Activated CD4-positive, alpha-beta memory T cell treated with anti-CD3 and anti-CD28 coated beads for 36 hours (primary cell): ENCODE measurements at regions of chr12 and their contacts with region 1.

Region 1: GRCh38 chr12:106223485-106224354 is 24.1 kb downstream of the CKAP4 start:
- DNase-seq: peak; percentile 83
- H3K4me3 Mint-ChIP-seq: no peak overlapping the region
- H3K27ac Mint-ChIP-seq: no peak overlapping the region
- H3K4me1 Mint-ChIP-seq: peaks cover 16% of the 10 kb centered on the region
- H3K27me3 Mint-ChIP-seq: peaks cover 2% of the 10 kb centered on the region

Region 2: DNA sequence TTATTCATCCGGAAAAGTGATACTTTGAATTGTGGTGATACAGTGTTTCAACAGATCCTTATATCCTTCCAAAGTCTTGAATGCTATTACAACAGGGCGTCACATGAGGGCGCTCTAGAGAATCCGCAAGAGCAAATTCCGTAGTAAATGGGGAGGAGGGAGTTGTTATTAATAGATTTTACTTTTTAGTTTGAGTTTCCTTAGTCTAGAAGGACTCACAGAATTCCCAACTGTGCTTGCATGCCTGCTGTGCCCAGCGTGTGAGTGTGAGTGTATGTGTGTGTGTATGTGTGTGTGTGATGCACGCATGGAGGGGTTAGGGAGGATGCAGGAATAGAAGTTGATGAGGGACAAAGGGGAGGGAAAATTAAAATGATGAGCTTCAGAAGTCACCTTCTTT is 518.0 kb before region 1 on chr12:
- CTCF ChIA-PET with region 1: no interaction called
- POLR2A ChIA-PET with region 1: no interaction called
- intact Hi-C with region 1: loop called (anchors 5 kb)
- DNase-seq: no peak
- H3K4me3 Mint-ChIP-seq: no peak overlapping the region
- H3K27ac Mint-ChIP-seq: no peak overlapping the region
- H3K4me1 Mint-ChIP-seq: no peaks in the 10 kb centered on the region
- H3K27me3 Mint-ChIP-seq: no peaks in the 10 kb centered on the region

Region 3: GRCh38 chr12:106170285-106170684 is 53.4 kb before region 1 on chr12:
- CTCF ChIA-PET with region 1: interaction called, 6 read pairs
- POLR2A ChIA-PET with region 1: no interaction called
- intact Hi-C with region 1: loop called (anchors 5 kb)
- DNase-seq: no peak
- H3K4me3 Mint-ChIP-seq: no peak overlapping the region
- H3K27ac Mint-ChIP-seq: no peak overlapping the region
- H3K4me1 Mint-ChIP-seq: peaks cover 2% of the 10 kb centered on the region
- H3K27me3 Mint-ChIP-seq: peaks cover 16% of the 10 kb centered on the region

Region 4: DNA sequence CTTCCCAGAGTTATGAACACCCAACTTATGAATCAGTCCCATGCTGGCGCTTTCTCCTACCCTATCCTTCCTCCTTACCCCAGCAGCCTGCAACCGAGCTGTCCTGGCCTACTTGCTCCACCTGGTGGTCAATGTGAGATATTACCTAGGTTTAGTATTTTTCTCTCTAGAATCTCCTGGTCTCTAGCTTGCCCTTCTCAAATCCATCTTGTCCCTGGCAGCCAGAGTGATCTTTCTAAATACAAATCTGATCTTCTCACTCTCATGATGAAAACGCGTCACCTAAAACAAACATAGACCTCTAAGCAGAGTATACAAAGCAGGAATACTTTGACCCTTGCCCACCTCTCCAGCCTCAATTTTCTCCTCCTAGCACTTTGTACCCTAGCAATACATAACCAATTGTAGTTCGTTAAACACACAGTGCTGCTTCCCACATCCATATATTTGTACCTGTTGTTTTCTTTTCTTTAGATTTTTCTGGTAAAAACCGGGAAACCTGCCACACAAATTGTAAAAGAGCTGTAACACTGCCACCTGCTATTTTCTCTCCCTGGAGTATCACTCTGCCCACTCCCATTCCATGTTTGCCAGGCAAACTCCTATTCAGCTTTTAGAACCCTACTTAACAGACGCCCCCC is 58.9 kb after region 1 on chr12:
- CTCF ChIA-PET with region 1: interaction called, 285 read pairs
- POLR2A ChIA-PET with region 1: no interaction called
- intact Hi-C with region 1: loop called (anchors 1 kb)
- DNase-seq: peak; percentile 65
- H3K4me3 Mint-ChIP-seq: no peak overlapping the region
- H3K27ac Mint-ChIP-seq: no peak overlapping the region
- H3K4me1 Mint-ChIP-seq: peaks cover 20% of the 10 kb centered on the region
- H3K27me3 Mint-ChIP-seq: peaks cover 1% of the 10 kb centered on the region

Region 5: GRCh38 chr12:106357549-106358395 is 134.1 kb after region 1 on chr12 and contains the start of gene POLR3B:
- CTCF ChIA-PET with region 1: interaction called, 9 read pairs
- POLR2A ChIA-PET with region 1: no interaction called
- intact Hi-C with region 1: loop called (anchors 1 kb)
- DNase-seq: peak; percentile 97
- H3K4me3 Mint-ChIP-seq: peak within 1 kb of the TSS; percentile 93
- H3K27ac Mint-ChIP-seq: peak within 1 kb of the TSS; percentile 92
- H3K4me1 Mint-ChIP-seq: peaks cover 15% of the 10 kb centered on the region
- H3K27me3 Mint-ChIP-seq: no peaks in the 10 kb centered on the region
- total RNA-seq, gene POLR3B: 6.2 to 7.3 TPM

Region 6: DNA sequence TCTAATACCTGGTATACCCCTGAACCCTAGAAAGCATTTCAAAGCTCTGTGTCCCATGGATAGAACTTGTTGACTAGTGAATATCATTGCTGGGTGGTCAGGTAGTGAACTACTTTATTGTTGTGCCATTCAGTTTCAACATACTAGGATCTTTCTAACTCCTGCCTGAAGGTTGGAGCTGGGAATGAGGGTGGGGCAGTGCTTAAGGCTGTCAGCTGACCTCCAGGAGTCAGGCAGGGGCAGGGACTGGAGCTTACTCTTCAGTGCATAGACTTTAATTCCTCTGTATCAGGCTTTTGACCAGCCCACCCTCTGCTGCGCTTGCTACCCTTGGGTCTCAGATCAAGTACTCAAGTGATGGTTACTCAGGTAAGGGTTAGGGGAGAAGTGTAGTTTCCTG is 256.5 kb after region 1 on chr12:
- CTCF ChIA-PET with region 1: no interaction called
- POLR2A ChIA-PET with region 1: no interaction called
- intact Hi-C with region 1: no loop called
- DNase-seq: no peak
- H3K4me3 Mint-ChIP-seq: no peak overlapping the region
- H3K27ac Mint-ChIP-seq: no peak overlapping the region
- H3K4me1 Mint-ChIP-seq: no peaks in the 10 kb centered on the region
- H3K27me3 Mint-ChIP-seq: no peaks in the 10 kb centered on the region